Dendritic cell treated with granulocyte-macrophage colony-stimulating factor and Interleukin-4, amounts not matched to agents 40 ng/mL and 50 ng/mL, for 4 days (primary cell): ENCODE measurements at regions of chr14 and their contacts with region 1.

Region 1: GRCh38 chr14:21383848-21384493 is at the start of gene SUPT16H:
- H3K4me3 Mint-ChIP-seq: peak within 1 kb of the TSS; percentile 96
- H3K27ac Mint-ChIP-seq: peak within 1 kb of the TSS; percentile 97
- H3K4me1 Mint-ChIP-seq: peaks cover 30% of the 10 kb centered on the region
- H3K27me3 Mint-ChIP-seq: no peaks in the 10 kb centered on the region

Region 2: GRCh38 chr14:21149641-21150367 is 234.2 kb before region 1 on chr14:
- intact Hi-C with region 1: no loop called
- H3K4me3 Mint-ChIP-seq: no peak overlapping the region
- H3K27ac Mint-ChIP-seq: no peak overlapping the region
- H3K4me1 Mint-ChIP-seq: no peaks in the 10 kb centered on the region
- H3K27me3 Mint-ChIP-seq: peaks cover 2% of the 10 kb centered on the region

Region 3: DNA sequence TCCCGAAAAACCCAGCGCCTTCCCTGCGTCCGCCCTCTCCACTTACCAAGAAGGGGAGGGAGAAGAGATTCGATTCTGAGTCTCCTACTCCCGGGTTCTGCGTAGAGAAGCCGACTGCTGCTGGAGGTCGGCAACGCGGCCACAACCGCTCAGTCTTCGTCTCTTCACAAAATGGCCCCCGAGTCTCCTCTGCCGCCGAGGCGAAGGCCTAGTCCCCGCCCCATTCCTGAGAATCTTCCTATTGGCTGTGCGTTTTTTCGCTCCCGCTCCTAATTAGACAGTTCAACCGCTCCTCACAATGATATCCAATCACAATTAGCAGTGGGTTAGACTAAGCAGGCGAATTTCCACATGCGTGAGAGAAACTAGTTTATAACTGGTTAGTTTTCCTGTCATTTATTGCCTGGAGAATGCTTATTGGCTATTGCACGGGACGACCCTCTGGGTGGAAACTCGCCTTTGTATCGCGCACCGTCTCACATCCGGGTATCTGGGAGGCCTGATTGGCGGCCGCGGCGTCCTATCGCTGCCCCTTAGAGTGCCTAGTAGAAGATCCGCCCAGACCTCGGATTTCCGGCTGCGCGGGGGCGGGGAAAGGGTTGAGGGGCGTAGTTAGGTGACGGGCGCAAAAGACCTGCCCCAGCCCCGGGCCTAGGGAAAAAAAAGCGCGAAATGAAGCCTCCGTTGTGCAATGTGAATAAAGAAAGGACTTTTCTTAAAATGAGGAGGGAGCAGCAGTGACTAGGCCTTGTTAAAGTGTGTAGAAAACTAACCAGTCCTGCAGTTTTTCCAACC is 114.5 kb before region 1 on chr14 and contains the start of gene HNRNPC:
- intact Hi-C with region 1: loop called (anchors 1 kb)
- H3K4me3 Mint-ChIP-seq: peak within 1 kb of the TSS; percentile 100
- H3K27ac Mint-ChIP-seq: peak within 1 kb of the TSS; percentile 98
- H3K4me1 Mint-ChIP-seq: peaks cover 37% of the 10 kb centered on the region
- H3K27me3 Mint-ChIP-seq: no peaks in the 10 kb centered on the region

Region 4: GRCh38 chr14:21455911-21456667 is 72.1 kb after region 1 on chr14 and contains the start of gene CHD8:
- intact Hi-C with region 1: loop called (anchors 1 kb)
- H3K4me3 Mint-ChIP-seq: peak within 1 kb of the TSS; percentile 90
- H3K27ac Mint-ChIP-seq: peak within 1 kb of the TSS; percentile 97
- H3K4me1 Mint-ChIP-seq: peaks cover 24% of the 10 kb centered on the region
- H3K27me3 Mint-ChIP-seq: no peaks in the 10 kb centered on the region